Activated CD4-positive, alpha-beta T cell treated with anti-CD3 and anti-CD28 coated beads for 36 hours (primary cell): ENCODE measurements at regions of chr3 and their contacts with region 1.

Region 1: DNA sequence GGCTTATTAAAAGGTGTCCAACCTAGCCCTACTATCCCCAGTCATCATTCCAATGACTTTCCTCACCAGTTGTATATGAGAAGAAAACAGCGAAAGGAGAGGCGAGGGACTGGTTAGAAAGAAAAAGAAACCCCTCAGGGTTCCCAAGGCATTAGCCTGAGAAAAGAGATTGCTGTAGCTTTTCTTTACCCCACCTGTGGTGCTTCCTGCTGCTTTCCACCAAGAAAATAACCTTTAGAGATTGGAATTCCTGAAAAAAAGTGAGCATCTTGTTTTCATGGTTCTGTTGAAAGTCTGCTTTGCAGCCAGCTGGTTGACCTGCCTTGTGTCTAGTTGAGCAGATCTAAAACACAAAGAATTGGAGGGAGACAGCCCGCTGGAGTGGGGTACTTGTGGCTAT is 196.4 kb downstream of the CADPS start:
- DNase-seq: no peak
- ATAC-seq: no peak
- H3K4me3 Mint-ChIP-seq: no peak overlapping the region
- H3K27ac Mint-ChIP-seq: no peak overlapping the region
- H3K4me1 Mint-ChIP-seq: no peaks in the 10 kb centered on the region
- H3K27me3 Mint-ChIP-seq: peaks cover 7% of the 10 kb centered on the region

Region 2: DNA sequence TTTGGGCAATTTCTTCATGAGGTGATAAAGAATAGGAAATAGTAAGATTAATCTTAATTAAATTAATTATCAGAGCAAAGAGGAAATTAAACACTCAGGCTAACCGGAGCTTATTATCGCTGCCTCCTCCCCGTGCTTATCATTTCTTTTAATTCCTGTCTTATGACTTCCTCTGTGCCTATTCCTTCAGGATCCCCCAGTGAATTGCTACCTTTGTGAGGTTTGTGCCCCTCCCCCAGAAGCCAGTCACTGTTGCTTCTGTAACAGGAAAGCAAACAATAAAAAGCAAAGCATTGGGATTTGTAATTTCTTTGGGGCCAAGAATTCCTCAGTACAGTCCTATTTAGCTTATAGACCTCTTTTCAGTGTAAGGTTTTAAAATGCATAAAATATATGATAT is 31.9 kb after region 1 on chr3:
- CTCF ChIA-PET with region 1: interaction called, 3 read pairs
- POLR2A ChIA-PET with region 1: no interaction called
- intact Hi-C with region 1: loop called in 1 of 2 experiments (anchors 1 kb)
- DNase-seq: no peak
- ATAC-seq: no peak
- H3K4me3 Mint-ChIP-seq: no peak overlapping the region
- H3K27ac Mint-ChIP-seq: no peak overlapping the region
- H3K4me1 Mint-ChIP-seq: no peaks in the 10 kb centered on the region
- H3K27me3 Mint-ChIP-seq: no peaks in the 10 kb centered on the region

Region 3: GRCh38 chr3:62888197-62888596 is 209.4 kb after region 1 on chr3:
- CTCF ChIA-PET with region 1: no interaction called
- POLR2A ChIA-PET with region 1: no interaction called
- intact Hi-C with region 1: no loop called
- DNase-seq: no peak
- ATAC-seq: no peak
- H3K4me3 Mint-ChIP-seq: no peak overlapping the region
- H3K27ac Mint-ChIP-seq: no peak overlapping the region
- H3K4me1 Mint-ChIP-seq: no peaks in the 10 kb centered on the region
- H3K27me3 Mint-ChIP-seq: no peaks in the 10 kb centered on the region